PC-9 (cell line): ENCODE measurements at regions of chr10 and their contacts with region 1.

Region 1: GRCh38 chr10:99395750-99396445 is 34.5 kb downstream of the GOT1 start:
- DNase-seq: peak; percentile 63 to 86
- H3K4me3 ChIP-seq: no peak overlapping the region
- H3K27ac ChIP-seq: peak overlapping the region; percentile 53
- H3K4me1 ChIP-seq: peaks cover 52% of the 10 kb centered on the region
- H3K27me3 ChIP-seq: no peaks in the 10 kb centered on the region
- CTCF ChIP-seq: no peak

Region 2: GRCh38 chr10:99430451-99431189 is 34.7 kb after region 1 on chr10 and contains the start of gene GOT1:
- CTCF ChIA-PET with region 1: interaction called, 11 read pairs
- POLR2A ChIA-PET with region 1: interaction called, 4 read pairs
- intact Hi-C with region 1: loop called (anchors 1 kb)
- DNase-seq: peak; percentile 88 to 96
- H3K4me3 ChIP-seq: peak within 1 kb of the TSS; percentile 88
- H3K27ac ChIP-seq: peak within 1 kb of the TSS; percentile 71
- H3K4me1 ChIP-seq: no peaks in the 10 kb centered on the region
- H3K27me3 ChIP-seq: no peaks in the 10 kb centered on the region
- CTCF ChIP-seq: no peak
- total RNA-seq, gene GOT1: 27.5 and 28.6 TPM in 2 replicates

Region 3: GRCh38 chr10:99560277-99561126 is 164.6 kb after region 1 on chr10:
- CTCF ChIA-PET with region 1: no interaction called
- POLR2A ChIA-PET with region 1: no interaction called
- intact Hi-C with region 1: loop called (anchors 5 kb)
- DNase-seq: peak in 1 of 2 experiments; percentile 22
- H3K4me3 ChIP-seq: no peak overlapping the region
- H3K27ac ChIP-seq: no peak overlapping the region
- H3K4me1 ChIP-seq: no peaks in the 10 kb centered on the region
- H3K27me3 ChIP-seq: no peaks in the 10 kb centered on the region
- CTCF ChIP-seq: peak; percentile 82

Region 4: DNA sequence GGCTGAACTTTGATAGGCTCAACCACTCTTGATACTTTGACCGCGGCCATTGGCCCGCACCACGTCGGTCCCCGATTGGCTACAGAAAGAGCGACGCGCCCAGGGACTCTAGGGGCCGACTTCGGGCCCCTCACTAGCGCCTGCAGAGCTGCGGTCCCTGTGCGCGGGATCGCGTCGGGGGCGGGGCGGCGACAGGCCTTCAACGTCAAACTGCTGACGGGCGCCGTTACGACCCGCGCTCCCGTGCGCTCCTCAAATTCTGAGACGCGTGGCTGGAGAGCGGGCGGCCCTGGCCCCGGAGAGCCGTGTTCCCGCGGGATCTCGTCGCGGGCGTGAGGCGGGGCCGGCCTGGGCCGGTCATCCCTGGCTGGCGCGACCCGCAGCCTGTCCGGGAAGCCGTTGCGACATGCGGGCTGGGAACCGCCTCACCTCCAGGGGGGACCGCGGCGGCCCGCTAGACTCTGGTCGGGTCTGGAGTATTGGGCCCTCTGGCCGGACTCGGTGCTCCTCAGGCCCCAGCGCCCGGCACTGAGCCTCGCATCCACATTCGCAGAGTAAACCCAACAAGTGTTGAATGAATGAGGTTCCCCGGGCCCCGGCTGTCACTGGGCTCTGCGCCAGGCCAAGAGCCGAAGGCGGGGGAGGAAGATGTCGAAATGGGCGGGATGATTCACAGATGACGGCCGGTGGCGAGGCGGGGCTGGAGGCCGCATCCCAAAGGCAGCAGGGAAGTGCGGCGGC is 225.0 kb after region 1 on chr10:
- CTCF ChIA-PET with region 1: no interaction called
- POLR2A ChIA-PET with region 1: interaction called, 10 read pairs
- intact Hi-C with region 1: no loop called
- DNase-seq: peak; percentile 77 to 85
- H3K4me3 ChIP-seq: peak overlapping the region; percentile 82
- H3K27ac ChIP-seq: peak overlapping the region; percentile 91
- H3K4me1 ChIP-seq: peaks cover 20% of the 10 kb centered on the region
- H3K27me3 ChIP-seq: no peaks in the 10 kb centered on the region
- CTCF ChIP-seq: no peak

Region 5: GRCh38 chr10:100728928-100729861 is 1333.3 kb after region 1 on chr10:
- CTCF ChIA-PET with region 1: no interaction called
- POLR2A ChIA-PET with region 1: no interaction called
- intact Hi-C with region 1: no loop called
- DNase-seq: no peak
- H3K4me3 ChIP-seq: no peak overlapping the region
- H3K27ac ChIP-seq: no peak overlapping the region
- H3K4me1 ChIP-seq: no peaks in the 10 kb centered on the region
- H3K27me3 ChIP-seq: peaks cover 38% of the 10 kb centered on the region
- CTCF ChIP-seq: no peak